Sciatic nerve (tissue), 2 donors: ENCODE measurements at regions of chr21 and their contacts with region 1.

Region 1: GRCh38 chr21:14773777-14774345 is 227.7 kb upstream of the SAMSN1 start:
- DNase-seq: peak; percentile 68
- ATAC-seq: no peak

Region 2: GRCh38 chr21:15065392-15066122 is 291.7 kb after region 1 on chr21:
- intact Hi-C with region 1: loop called (anchors 2 kb)
- DNase-seq: peak; percentile 89
- ATAC-seq: peak; percentile 84

Region 3: GRCh38 chr21:16279731-16280581 is 1506.1 kb after region 1 on chr21:
- intact Hi-C with region 1: loop called (anchors 10 kb)
- DNase-seq: peak; percentile 65
- ATAC-seq: peak; percentile 93